ENCODE measurements at regions of chr6 and their contacts with region 1.

Region 1: GRCh38 chr6:35342258-35343091 is at the start of gene PPARD:
- DNase-seq: peak; percentile 100
- H3K4me3 ChIP-seq: peak within 1 kb of the TSS; percentile 99
- H3K27ac ChIP-seq: peak within 1 kb of the TSS; percentile 80
- H3K4me1 ChIP-seq: peaks cover 7% of the 10 kb centered on the region
- H3K27me3 ChIP-seq: no peaks in the 10 kb centered on the region
- CTCF ChIP-seq: peak; percentile 92
- total RNA-seq, gene PPARD: 38.1 to 41.8 TPM

Region 2: GRCh38 chr6:35452186-35453090 is 110.0 kb after region 1 on chr6 and contains the start of gene FANCE:
- intact Hi-C with region 1: loop called (anchors 1 kb)
- DNase-seq: peak; percentile 99
- H3K4me3 ChIP-seq: peak within 1 kb of the TSS; percentile 74
- H3K27ac ChIP-seq: peak within 1 kb of the TSS; percentile 72
- H3K4me1 ChIP-seq: peaks cover 6% of the 10 kb centered on the region
- H3K27me3 ChIP-seq: no peaks in the 10 kb centered on the region
- CTCF ChIP-seq: no peak
- total RNA-seq, gene FANCE: 3.7 to 10.7 TPM